T-cell (primary cell): ENCODE measurements at regions of chr12 and their contacts with region 1.

Region 1: GRCh38 chr12:72647139-72647538 is 375.0 kb downstream of the TRHDE start:
- DNase-seq: no peak
- ATAC-seq: no peak
- H3K4me3 ChIP-seq: no peak overlapping the region
- H3K4me3 Mint-ChIP-seq: no peak overlapping the region
- H3K27ac ChIP-seq: no peak overlapping the region
- H3K27ac Mint-ChIP-seq: no peak overlapping the region
- H3K4me1 ChIP-seq: no peaks in the 10 kb centered on the region
- H3K4me1 Mint-ChIP-seq: no peaks in the 10 kb centered on the region
- H3K27me3 ChIP-seq: no peaks in the 10 kb centered on the region
- H3K27me3 Mint-ChIP-seq: no peaks in the 10 kb centered on the region

Region 2: DNA sequence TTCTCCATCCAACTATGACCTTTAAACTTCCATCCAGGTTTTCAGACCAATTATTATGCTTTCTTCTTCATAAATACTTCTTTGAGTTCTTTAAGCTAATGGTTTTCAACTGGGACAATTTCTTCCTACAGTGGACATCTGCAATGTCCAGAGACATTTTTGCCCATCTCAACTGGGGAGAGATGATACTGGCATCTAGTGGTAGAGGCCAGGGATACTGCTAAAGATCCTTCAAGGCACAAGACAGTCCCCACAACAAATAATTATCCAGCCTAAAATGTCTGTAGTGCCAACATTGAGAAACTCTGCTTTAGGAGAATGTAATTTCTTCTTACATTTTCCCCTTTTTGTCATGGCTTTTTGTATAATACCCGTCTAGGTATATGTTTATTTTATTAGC is 364.4 kb before region 1 on chr12:
- CTCF ChIA-PET with region 1: no interaction called
- POLR2A ChIA-PET with region 1: no interaction called
- DNase-seq: no peak
- ATAC-seq: no peak
- H3K4me3 ChIP-seq: no peak overlapping the region
- H3K4me3 Mint-ChIP-seq: no peak overlapping the region
- H3K27ac ChIP-seq: no peak overlapping the region
- H3K27ac Mint-ChIP-seq: no peak overlapping the region
- H3K4me1 ChIP-seq: no peaks in the 10 kb centered on the region
- H3K4me1 Mint-ChIP-seq: no peaks in the 10 kb centered on the region
- H3K27me3 ChIP-seq: peaks cover 0 to 2% of the 10 kb centered on the region in 2 experiments
- H3K27me3 Mint-ChIP-seq: peaks cover 0 to 3% of the 10 kb centered on the region in 2 donors

Region 3: DNA sequence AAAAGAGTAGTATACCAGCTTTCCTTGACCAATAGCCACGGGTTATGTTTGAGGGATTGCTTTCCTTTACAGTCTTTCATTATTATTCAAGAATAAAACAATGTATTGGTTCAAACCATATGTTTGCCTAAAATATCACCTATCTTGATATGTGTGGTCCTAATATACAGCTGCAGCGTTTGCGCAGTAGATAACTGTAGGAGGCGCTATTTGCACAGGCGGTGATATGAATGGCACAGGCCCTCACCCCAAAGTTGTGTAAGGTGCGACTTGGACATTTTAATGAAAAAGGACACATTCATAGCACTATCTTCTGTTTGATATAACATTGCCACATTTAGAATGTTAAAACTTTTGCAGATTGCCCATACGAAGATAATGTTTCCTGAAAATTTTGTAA is 76.5 kb before region 1 on chr12:
- CTCF ChIA-PET with region 1: interaction called in 1 of 2 experiments, 11 read pairs
- POLR2A ChIA-PET with region 1: no interaction called
- DNase-seq: no peak
- ATAC-seq: no peak
- H3K4me3 ChIP-seq: no peak overlapping the region
- H3K4me3 Mint-ChIP-seq: no peak overlapping the region
- H3K27ac ChIP-seq: no peak overlapping the region
- H3K27ac Mint-ChIP-seq: no peak overlapping the region
- H3K4me1 ChIP-seq: no peaks in the 10 kb centered on the region
- H3K4me1 Mint-ChIP-seq: no peaks in the 10 kb centered on the region
- H3K27me3 ChIP-seq: no peaks in the 10 kb centered on the region
- H3K27me3 Mint-ChIP-seq: no peaks in the 10 kb centered on the region

Region 4: GRCh38 chr12:72622556-72622955 is 24.6 kb before region 1 on chr12:
- CTCF ChIA-PET with region 1: no interaction called
- POLR2A ChIA-PET with region 1: no interaction called
- DNase-seq: no peak
- ATAC-seq: no peak
- H3K4me3 ChIP-seq: no peak overlapping the region
- H3K4me3 Mint-ChIP-seq: no peak overlapping the region
- H3K27ac ChIP-seq: no peak overlapping the region
- H3K27ac Mint-ChIP-seq: no peak overlapping the region
- H3K4me1 ChIP-seq: no peaks in the 10 kb centered on the region
- H3K4me1 Mint-ChIP-seq: no peaks in the 10 kb centered on the region
- H3K27me3 ChIP-seq: no peaks in the 10 kb centered on the region
- H3K27me3 Mint-ChIP-seq: no peaks in the 10 kb centered on the region

Region 5: DNA sequence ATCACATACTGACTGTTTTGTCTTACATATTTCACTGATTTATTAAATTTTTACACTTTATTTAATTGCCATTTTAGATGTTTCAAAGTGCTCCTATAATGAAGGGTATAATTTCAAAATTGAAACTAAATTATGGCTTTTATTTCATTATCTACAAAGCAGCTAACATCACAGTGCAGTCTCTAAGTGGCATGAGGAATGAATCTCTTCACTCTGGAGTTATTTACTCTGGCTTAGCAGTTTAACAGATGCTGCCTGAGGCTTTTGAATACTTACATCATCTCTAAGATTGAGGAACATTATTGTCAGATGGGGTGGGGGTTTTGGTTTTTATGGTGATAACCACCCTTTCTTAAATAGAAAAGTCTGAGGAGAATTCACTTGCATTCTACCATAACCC is 11.5 kb after region 1 on chr12:
- CTCF ChIA-PET with region 1: no interaction called
- POLR2A ChIA-PET with region 1: no interaction called
- DNase-seq: no peak
- ATAC-seq: no peak
- H3K4me3 ChIP-seq: no peak overlapping the region
- H3K4me3 Mint-ChIP-seq: no peak overlapping the region
- H3K27ac ChIP-seq: no peak overlapping the region
- H3K27ac Mint-ChIP-seq: no peak overlapping the region
- H3K4me1 ChIP-seq: no peaks in the 10 kb centered on the region
- H3K4me1 Mint-ChIP-seq: no peaks in the 10 kb centered on the region
- H3K27me3 ChIP-seq: no peaks in the 10 kb centered on the region
- H3K27me3 Mint-ChIP-seq: no peaks in the 10 kb centered on the region